Activated naive CD4-positive, alpha-beta T cell treated with anti-CD3 and anti-CD28 coated beads for 36 hours (primary cell): ENCODE measurements at regions of chr6 and their contacts with region 1.

Region 1: GRCh38 chr6:16183187-16183664 is 54.3 kb downstream of the MYLIP start:
- DNase-seq: no peak
- H3K4me3 Mint-ChIP-seq: no peak overlapping the region
- H3K27ac Mint-ChIP-seq: no peak overlapping the region
- H3K4me1 Mint-ChIP-seq: peaks cover 20% of the 10 kb centered on the region
- H3K27me3 Mint-ChIP-seq: no peaks in the 10 kb centered on the region

Region 2: DNA sequence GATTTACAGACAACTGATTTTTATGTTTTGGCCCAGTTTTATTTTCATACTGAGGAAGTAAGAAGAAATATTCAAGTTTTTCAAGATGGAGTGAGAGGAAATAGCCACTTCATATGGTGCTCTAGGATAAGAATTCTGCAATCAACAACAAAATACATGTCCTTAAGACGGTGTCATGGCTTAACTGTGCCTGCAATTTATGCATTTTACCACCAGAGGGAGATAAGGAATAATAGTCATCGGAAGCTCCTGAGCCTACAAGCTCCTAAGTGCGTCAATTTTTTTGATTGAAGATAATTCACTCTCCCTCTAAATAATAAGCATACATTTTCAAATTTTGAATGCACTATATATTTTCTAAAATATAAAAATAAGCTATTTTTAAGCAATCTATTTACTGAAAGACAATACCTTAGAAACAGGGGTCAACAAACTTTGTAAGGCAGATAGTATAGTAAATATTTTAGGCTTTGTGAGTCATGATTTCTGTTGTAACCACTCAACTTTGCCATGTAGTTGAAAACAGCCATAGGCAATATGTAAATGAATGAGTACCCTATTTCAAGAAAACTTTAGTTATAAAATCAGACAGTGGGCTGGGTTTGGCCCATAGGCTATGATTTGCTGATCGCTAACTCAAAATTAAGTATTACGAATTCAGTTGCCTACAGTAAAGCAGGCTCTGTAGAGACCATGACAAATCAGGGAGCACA is 289.5 kb before region 1 on chr6:
- CTCF ChIA-PET with region 1: interaction called, 10 read pairs
- intact Hi-C with region 1: loop called (anchors 1 kb)
- DNase-seq: no peak
- H3K4me3 Mint-ChIP-seq: no peak overlapping the region
- H3K27ac Mint-ChIP-seq: no peak overlapping the region
- H3K4me1 Mint-ChIP-seq: no peaks in the 10 kb centered on the region
- H3K27me3 Mint-ChIP-seq: peaks cover 2% of the 10 kb centered on the region

Region 3: DNA sequence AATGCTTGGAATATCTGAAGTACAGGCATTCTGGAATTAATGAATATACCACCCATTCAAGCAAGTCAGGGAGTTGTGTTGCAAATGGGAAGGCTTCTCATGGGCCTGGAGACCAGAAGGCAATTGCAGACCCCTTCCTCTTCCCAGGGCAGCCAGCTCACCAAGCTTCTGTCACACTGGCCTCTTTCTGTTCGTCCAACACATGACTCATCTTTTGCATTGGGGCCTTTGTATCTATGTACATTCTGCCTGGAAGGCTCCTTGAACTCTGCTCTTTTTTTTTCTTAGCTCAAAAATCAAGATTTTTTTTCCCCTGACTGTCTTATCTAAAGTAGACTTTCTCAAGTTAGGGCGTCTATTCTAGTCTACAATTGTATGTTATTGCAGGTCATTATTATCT is 187.2 kb before region 1 on chr6:
- CTCF ChIA-PET with region 1: no interaction called
- intact Hi-C with region 1: loop called (anchors 10 kb)
- DNase-seq: no peak
- H3K4me3 Mint-ChIP-seq: no peak overlapping the region
- H3K27ac Mint-ChIP-seq: no peak overlapping the region
- H3K4me1 Mint-ChIP-seq: no peaks in the 10 kb centered on the region
- H3K27me3 Mint-ChIP-seq: no peaks in the 10 kb centered on the region

Region 4: GRCh38 chr6:16206595-16207037 is 23.4 kb after region 1 on chr6:
- CTCF ChIA-PET with region 1: interaction called, 13 read pairs
- intact Hi-C with region 1: loop called (anchors 1 kb)
- DNase-seq: peak; percentile 61
- H3K4me3 Mint-ChIP-seq: no peak overlapping the region
- H3K27ac Mint-ChIP-seq: no peak overlapping the region
- H3K4me1 Mint-ChIP-seq: no peaks in the 10 kb centered on the region
- H3K27me3 Mint-ChIP-seq: peaks cover 3% of the 10 kb centered on the region